Colonic mucosa (tissue), 4 donors: ENCODE measurements at regions of chr15 and their contacts with region 1.

Region 1: GRCh38 chr15:92808978-92809879 is 90.9 kb upstream of the CHD2 start:
- DNase-seq: peak; percentile 98
- H3K4me3 ChIP-seq: peak overlapping the region; percentile 29
- H3K27ac ChIP-seq: peak overlapping the region; percentile 98
- H3K4me1 ChIP-seq: peaks cover 3% of the 10 kb centered on the region
- H3K27me3 ChIP-seq: no peaks in the 10 kb centered on the region
- CTCF ChIP-seq: peak; percentile 96

Region 2: DNA sequence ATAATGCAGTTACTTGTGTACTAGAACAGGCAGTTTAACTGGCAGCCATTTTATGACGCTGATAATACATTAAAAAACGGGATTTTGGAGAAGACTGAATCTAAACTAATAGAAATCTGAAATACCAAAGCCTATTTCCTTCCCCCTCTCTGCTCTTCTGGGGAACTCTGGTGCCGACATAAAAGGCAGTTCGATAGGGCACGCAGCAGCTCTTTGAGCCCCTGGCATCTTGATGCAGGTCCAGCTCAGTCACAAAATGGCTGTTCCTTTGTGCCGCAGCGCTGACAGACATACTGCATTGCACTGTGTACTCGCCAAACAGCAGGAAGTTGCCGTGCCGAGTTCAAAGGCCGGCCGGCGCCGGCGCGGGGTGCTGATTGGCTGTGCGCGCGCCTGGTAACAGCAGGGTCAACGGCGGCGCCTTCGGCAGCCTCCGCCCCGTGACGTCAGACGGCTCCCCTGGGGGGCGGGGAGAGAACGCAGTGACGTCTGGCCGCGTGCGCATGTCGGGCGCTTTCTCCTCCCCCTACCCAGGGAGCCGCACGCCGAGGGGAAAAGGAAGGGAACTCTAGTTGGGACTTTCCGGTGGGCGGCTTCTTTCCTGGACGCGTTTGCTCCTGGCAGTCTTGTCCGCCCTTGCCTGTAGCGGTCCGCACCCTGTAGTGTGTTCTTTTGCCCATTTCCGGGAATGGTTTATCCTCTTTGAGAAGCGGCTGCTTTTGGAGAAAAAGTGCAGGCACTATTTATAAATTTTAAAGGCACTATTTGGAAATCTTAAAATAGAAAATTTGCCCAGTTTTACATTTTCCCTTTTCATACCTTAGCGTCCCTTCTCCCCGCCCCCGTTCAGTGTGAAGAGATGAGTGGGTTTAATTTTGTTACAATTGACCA is 95.0 kb after region 1 on chr15:
- intact Hi-C with region 1: loop called (anchors 5 kb)
- DNase-seq: peak; percentile 99
- H3K4me3 ChIP-seq: peak overlapping the region; percentile 41
- H3K27ac ChIP-seq: peak overlapping the region; percentile 98
- H3K4me1 ChIP-seq: peaks cover 19% of the 10 kb centered on the region
- H3K27me3 ChIP-seq: no peaks in the 10 kb centered on the region
- CTCF ChIP-seq: no peak